ENCODE measurements at regions of chr5 and their contacts with region 1.

Region 1: DNA sequence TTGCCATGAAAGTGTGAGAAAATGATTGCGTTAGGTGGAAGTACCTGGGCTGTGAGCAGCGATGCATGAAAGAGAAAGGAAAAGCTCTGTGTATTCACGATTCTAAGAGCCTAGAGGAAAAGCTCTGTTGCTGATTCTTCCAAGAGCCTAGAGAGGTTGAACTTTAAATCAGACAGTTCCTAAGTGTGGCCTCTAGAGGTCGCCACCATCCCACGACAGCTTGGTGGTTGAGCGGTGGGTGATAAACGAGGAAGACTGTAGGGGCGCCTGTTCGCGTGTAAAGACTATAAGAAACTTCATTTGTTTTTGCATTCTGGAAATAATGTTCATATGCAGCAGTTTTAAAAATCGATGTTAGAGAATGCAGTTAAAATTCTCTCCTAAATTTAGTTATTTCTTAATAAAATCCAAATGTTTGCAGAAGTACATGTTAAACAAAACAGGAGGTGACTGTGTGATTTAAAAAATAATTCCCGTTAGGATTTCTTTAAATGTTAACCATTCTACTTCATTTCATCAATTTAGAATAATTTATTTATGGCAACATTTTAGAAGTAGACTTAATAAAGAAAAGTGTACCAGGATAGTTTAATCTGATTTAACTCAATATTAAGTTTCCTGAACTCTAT is 107.7 kb downstream of the TENT4A start:
- DNase-seq: no peak
- H3K4me3 ChIP-seq: no peak overlapping the region
- H3K27ac ChIP-seq: no peak overlapping the region
- H3K4me1 ChIP-seq: no peaks in the 10 kb centered on the region
- H3K27me3 ChIP-seq: peaks cover 2% of the 10 kb centered on the region
- CTCF ChIP-seq: peak; percentile 59 to 60

Region 2: DNA sequence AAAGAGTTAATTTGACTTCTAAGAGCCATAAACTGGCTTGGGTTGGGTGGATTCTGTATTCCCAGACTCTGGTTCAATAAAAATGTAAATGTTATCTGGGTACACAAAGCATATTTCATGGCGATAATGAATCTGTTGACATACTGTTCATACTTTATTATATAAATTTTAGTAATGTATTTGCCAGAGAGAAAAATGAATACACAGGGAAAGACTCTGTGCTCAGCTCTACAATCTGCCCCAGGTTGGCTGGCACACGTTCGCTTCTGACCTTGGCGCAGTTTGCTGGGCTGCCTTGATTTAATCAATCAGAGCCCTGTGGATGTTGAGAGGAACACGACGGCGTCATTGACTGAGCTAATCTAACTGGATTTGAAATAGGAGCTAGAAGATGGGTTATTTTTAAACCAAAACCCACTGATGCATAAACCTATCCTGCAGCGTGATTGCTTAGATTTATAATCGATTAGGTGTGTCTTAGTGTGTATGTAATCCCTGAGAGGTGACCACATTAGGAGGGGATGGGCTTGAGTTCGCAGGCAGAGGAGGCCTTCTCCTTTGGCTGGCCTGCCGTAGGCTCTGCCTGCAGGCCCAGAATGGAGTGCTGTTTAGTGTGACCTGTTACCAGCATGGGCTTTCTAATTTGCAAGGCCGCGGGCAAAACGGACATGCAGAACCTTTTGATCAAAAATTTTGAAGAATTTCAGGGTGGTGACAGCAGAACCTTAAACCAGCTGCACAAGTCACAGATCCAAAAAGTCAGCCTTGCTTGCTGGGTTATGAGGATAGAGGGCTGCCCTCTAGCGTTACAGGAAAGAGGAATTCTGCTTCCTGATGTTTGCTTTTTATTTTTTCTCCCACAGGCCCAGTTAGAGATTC is 571.1 kb after region 1 on chr5:
- CTCF ChIA-PET with region 1: no interaction called
- dilution Hi-C with region 1: no loop called
- in situ Hi-C with region 1: no loop called
- intact Hi-C with region 1: loop called (anchors 5 kb)
- DNase-seq: no peak
- H3K4me3 ChIP-seq: no peak overlapping the region
- H3K27ac ChIP-seq: no peak overlapping the region
- H3K4me1 ChIP-seq: peaks cover 5% of the 10 kb centered on the region
- H3K27me3 ChIP-seq: peaks cover 6% of the 10 kb centered on the region
- CTCF ChIP-seq: peak in 1 of 2 donors; percentile 45

Region 3: GRCh38 chr5:7745882-7746610 is 925.1 kb after region 1 on chr5:
- CTCF ChIA-PET with region 1: no interaction called
- dilution Hi-C with region 1: no loop called
- in situ Hi-C with region 1: no loop called
- intact Hi-C with region 1: loop called (anchors 5 kb)
- DNase-seq: peak; percentile 38
- H3K4me3 ChIP-seq: no peak overlapping the region
- H3K27ac ChIP-seq: no peak overlapping the region
- H3K4me1 ChIP-seq: no peaks in the 10 kb centered on the region
- H3K27me3 ChIP-seq: no peaks in the 10 kb centered on the region
- CTCF ChIP-seq: peak; percentile 79 to 87

Region 4: DNA sequence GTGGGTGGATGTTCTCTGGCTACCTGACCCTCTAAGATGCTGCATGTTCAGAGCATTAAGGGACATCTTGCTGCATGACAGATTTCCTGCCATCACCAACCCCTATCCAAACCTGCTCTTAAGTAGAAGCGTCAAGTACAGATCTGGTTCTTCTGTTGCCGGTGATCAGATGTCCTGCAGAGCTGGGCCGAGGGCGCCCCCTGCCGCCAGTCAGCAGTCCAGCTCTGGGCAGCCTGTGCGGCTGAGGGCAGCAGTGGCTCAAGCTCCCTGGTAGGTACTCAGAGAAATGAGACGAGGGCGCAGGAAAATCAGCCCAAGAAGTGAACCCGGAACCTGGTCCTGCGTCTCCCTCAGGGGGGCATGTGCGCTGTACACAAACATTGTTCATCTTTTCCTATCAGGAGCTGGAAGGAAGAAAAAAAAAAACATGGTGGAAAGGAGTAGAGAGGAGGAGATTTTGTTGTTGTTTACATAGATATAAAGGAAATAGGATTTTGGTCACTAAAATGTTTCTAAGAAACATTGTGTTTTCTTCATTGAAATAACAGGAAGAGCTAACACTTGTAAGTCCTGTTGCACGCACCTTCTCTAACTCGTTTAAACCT is 934.1 kb after region 1 on chr5:
- CTCF ChIA-PET with region 1: no interaction called
- dilution Hi-C with region 1: no loop called
- in situ Hi-C with region 1: no loop called
- intact Hi-C with region 1: loop called (anchors 5 kb)
- DNase-seq: peak; percentile 24
- H3K4me3 ChIP-seq: no peak overlapping the region
- H3K27ac ChIP-seq: no peak overlapping the region
- H3K4me1 ChIP-seq: no peaks in the 10 kb centered on the region
- H3K27me3 ChIP-seq: no peaks in the 10 kb centered on the region
- CTCF ChIP-seq: peak; percentile 75 to 86